OCI-LY7 (cell line): ENCODE measurements at regions of chr18 and their contacts with region 1.

Region 1: DNA sequence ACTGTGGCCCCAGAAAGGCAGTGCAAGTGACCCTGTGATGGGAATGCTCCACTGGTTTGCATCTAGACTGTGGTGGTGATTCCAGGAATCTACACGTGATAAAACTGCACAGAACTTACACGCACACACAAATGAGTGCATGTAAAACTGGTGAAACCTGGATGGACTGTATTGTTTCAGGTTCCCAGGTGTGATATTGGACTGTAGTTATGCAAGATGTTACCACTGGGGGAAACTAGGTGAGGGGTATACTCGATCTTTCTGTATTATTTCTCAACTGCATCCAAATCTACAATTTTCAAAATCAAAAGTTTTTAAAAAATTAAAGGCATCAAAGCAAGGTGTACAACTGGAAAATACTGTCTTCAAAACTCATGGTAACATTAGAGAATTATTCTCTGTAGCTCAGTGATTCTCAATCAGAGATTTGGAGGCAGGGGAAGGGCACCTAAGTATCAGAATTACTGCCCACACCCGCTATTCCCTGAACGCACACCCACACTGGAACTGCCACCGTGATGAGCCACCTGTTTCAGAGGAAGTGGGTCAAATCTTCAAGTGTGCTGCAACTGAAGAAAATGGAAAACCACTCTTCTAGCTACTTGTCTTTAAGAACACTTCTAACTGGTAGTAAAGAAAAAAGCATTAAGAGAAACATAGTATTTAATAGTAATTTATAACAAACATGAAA is 26.7 kb downstream of the PTPN2 start:
- DNase-seq: peak; percentile 75
- H3K4me3 ChIP-seq: peak overlapping the region; percentile 11
- H3K27ac ChIP-seq: peak overlapping the region; percentile 89
- H3K4me1 ChIP-seq: peaks cover 89% of the 10 kb centered on the region
- CTCF ChIP-seq: peak; percentile 45; the same call in 1 of the 2 replicates

Region 2: GRCh38 chr18:12750076-12750714 is 107.2 kb before region 1 on chr18:
- CTCF ChIA-PET with region 1: no interaction called
- POLR2A ChIA-PET with region 1: no interaction called
- intact Hi-C with region 1: loop called (anchors 1 kb)
- DNase-seq: peak; percentile 95
- H3K4me3 ChIP-seq: peak overlapping the region; percentile 15
- H3K27ac ChIP-seq: peak overlapping the region; percentile 62
- H3K4me1 ChIP-seq: peaks cover 40% of the 10 kb centered on the region
- CTCF ChIP-seq: no peak

Region 3: DNA sequence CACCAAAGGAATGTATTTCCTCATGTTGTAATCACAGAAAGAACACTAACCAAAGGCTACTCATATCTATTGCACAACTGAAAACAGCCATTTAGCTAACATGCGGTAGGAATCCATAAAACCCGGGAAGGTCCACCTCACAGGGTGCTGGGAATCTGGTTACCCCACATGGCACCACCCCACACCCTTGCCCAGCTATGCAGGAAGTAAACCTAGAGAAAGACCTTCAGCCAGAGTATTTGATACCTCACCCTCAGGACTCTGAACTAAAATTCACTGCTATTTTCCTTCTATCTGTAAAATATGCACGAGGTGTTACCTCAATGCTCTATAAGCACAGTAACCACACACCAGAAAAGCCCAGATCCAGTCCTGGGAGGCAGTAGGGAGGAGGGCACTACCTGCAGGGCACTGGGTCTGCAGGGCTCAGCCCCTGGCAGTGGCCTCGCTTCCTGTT is 19.2 kb before region 1 on chr18:
- CTCF ChIA-PET with region 1: no interaction called
- POLR2A ChIA-PET with region 1: interaction called, 3 read pairs
- intact Hi-C with region 1: loop called (anchors 1 kb)
- DNase-seq: peak; percentile 31
- H3K4me3 ChIP-seq: peak overlapping the region; percentile 46
- H3K27ac ChIP-seq: peak overlapping the region; percentile 18
- H3K4me1 ChIP-seq: peaks cover 39% of the 10 kb centered on the region
- CTCF ChIP-seq: no peak

Region 4: DNA sequence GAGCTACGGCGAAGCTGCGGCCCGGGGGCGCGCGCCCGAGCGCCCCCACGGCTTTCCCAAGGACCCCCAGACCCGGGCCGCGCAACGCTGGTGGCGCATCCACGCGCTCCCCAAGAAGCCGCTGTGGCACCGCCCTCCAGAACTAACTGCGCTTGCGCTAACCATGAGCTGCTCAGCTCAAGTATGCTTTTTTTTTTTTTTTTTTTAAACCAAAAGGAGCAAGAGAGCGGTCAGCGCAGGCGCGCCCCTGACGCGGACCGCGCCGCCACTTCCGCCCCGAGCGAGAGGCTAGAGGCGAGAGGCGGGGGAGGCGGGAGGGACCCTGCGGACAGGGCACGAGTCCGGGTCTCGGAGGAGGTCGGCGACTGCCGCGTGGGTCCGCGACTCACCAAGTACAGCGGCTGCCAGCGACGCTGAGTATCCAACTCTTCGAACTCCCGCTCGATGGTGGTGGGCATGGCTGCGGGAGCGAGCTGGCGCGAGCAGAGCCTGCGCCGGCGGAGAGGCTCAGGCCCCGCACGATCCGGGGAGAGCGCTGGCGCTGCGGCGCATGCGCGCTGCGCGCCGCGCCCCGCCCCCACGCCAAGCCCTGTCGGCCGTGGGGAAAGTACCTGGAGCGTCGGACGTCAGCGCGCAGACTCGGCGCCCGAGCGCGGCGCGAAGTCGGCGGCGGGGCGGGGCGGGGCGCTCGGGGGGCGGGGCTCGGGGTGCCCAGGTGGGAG is 26.5 kb after region 1 on chr18 and contains the start of gene PTPN2:
- CTCF ChIA-PET with region 1: no interaction called
- POLR2A ChIA-PET with region 1: interaction called, 52 read pairs
- intact Hi-C with region 1: loop called (anchors 2 kb)
- DNase-seq: peak; percentile 95
- H3K4me3 ChIP-seq: peak within 1 kb of the TSS; percentile 78
- H3K27ac ChIP-seq: peak within 1 kb of the TSS; percentile 86
- H3K4me1 ChIP-seq: peaks cover 61% of the 10 kb centered on the region
- CTCF ChIP-seq: no peak
- total RNA-seq, gene PTPN2: 69.7 and 85.0 TPM in 2 replicates

Region 5: DNA sequence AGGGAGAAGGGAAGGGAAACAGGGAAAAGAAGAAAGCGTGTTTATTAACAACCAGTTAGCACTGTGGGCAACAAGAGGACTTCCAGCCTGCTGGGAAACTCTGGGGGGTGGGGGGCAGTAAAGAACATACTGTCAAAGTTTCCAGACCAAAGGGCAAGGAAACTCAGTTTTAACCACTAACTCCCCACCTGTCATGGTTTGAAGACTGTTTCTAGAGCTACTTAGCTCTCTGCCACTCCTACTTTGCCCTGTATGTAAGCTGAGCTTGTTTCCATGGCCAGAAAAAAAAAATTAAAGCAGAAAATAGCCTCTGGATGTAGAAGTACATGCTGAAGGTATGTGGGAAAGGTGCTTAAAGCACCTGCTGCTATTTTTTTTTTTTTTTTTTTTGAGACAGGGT is 37.7 kb after region 1 on chr18:
- CTCF ChIA-PET with region 1: no interaction called
- POLR2A ChIA-PET with region 1: no interaction called
- intact Hi-C with region 1: no loop called
- DNase-seq: no peak
- H3K4me3 ChIP-seq: no peak overlapping the region
- H3K27ac ChIP-seq: no peak overlapping the region
- H3K4me1 ChIP-seq: no peaks in the 10 kb centered on the region
- CTCF ChIP-seq: no peak

Region 6: DNA sequence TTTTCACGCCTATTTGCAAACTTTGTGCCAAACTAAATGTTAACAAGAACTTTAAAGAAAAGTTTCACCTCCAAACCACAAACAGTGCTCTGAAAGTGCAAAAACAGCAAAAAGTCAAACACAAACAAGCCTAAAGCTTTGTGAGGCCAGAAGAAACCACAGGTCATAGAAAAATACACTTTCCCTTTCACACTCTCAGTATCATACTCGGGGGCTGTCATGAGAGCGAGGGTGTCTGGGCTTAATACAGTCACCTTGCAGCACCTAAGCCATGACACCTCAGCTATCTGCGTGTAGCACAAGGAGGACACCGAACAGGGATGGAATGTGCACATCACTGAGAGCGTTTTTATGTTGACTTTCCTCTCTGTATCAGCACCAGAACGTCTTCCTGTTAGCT is 63.8 kb after region 1 on chr18:
- CTCF ChIA-PET with region 1: no interaction called
- POLR2A ChIA-PET with region 1: no interaction called
- intact Hi-C with region 1: no loop called
- DNase-seq: no peak
- H3K4me3 ChIP-seq: no peak overlapping the region
- H3K27ac ChIP-seq: no peak overlapping the region
- H3K4me1 ChIP-seq: no peaks in the 10 kb centered on the region
- CTCF ChIP-seq: no peak